GM23248 (cell line): ENCODE measurements at regions of chr7 and their contacts with region 1.

Region 1: GRCh38 chr7:119943942-119944600 is 328.9 kb upstream of the KCND2 start:
- DNase-seq: no peak
- H3K4me3 ChIP-seq: no peak overlapping the region
- H3K27ac ChIP-seq: no peak overlapping the region
- H3K4me1 ChIP-seq: no peaks in the 10 kb centered on the region
- H3K27me3 ChIP-seq: no peaks in the 10 kb centered on the region

Region 2: GRCh38 chr7:120272261-120272660 is 328.2 kb after region 1 on chr7:
- in situ Hi-C with region 1: loop called (anchors 10 kb)
- DNase-seq: peak; percentile 78
- H3K4me3 ChIP-seq: peak overlapping the region; percentile 90
- H3K27ac ChIP-seq: no peak overlapping the region
- H3K4me1 ChIP-seq: no peaks in the 10 kb centered on the region
- H3K27me3 ChIP-seq: no peaks in the 10 kb centered on the region; the same call in none of the 2 replicates